Ascending aorta (tissue), 2 donors: ENCODE measurements at regions of chr6 and their contacts with region 1.

Region 1: GRCh38 chr6:103264020-103264419 is 1595.7 kb downstream of the HACE1 start:
- DNase-seq: no peak
- H3K4me3 ChIP-seq: no peak overlapping the region
- H3K27ac ChIP-seq: no peak overlapping the region
- H3K4me1 ChIP-seq: no peaks in the 10 kb centered on the region
- H3K27me3 ChIP-seq: no peaks in the 10 kb centered on the region
- CTCF ChIP-seq: no peak

Region 2: GRCh38 chr6:103210686-103211085 is 53.3 kb before region 1 on chr6:
- intact Hi-C with region 1: no loop called
- DNase-seq: no peak
- H3K4me3 ChIP-seq: no peak overlapping the region
- H3K27ac ChIP-seq: no peak overlapping the region
- H3K4me1 ChIP-seq: no peaks in the 10 kb centered on the region
- H3K27me3 ChIP-seq: no peaks in the 10 kb centered on the region
- CTCF ChIP-seq: no peak

Region 3: DNA sequence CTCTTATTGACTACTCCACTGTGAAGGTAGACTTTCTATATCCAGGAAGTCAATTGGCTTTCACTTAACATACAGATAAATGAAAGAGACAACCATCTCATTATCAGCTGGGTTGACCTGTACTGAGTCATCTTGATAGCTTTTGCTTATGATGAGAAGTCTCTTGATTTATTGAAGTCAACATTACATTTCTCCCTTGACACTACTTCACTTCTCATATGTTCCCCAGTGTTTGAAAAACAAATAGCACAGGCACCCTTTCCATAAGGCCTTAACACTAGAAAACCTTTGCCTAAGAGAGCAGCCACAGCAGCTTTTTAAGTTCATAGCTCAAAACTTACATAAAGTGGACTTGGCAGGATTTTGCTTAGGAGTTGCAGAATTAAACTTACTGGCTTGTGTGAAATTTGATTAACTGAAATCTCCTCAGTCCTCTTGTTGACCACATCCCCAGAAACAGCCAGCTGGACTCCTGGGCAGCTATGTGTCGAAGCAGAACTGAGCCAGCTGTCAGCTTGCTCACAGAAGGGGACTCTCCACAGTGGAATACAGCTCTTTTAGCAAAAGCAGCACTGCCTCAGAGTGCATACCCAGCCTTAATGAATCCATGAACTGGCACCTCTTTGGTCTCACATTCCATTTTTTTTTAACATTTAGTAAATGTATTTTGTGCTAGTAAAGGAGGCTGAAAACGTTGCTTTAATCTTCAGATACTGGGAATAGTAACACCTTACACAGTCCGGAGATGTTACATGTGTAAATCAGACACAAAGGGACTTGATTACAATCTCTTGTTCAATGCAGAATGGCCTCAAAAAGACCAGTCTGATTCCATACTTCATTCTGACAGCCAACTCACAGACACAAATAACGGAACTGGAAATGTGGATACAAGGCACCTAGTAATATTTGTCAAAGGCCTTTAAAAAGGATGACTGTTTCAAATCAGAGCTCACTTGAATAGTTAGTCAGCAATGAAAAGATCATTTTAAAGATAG is 63.0 kb after region 1 on chr6:
- intact Hi-C with region 1: loop called (anchors 10 kb)
- DNase-seq: no peak
- H3K4me3 ChIP-seq: no peak overlapping the region
- H3K27ac ChIP-seq: no peak overlapping the region
- H3K4me1 ChIP-seq: no peaks in the 10 kb centered on the region
- H3K27me3 ChIP-seq: no peaks in the 10 kb centered on the region
- CTCF ChIP-seq: no peak